ENCODE measurements at regions of chr1 and their contacts with region 1.

Region 1: DNA sequence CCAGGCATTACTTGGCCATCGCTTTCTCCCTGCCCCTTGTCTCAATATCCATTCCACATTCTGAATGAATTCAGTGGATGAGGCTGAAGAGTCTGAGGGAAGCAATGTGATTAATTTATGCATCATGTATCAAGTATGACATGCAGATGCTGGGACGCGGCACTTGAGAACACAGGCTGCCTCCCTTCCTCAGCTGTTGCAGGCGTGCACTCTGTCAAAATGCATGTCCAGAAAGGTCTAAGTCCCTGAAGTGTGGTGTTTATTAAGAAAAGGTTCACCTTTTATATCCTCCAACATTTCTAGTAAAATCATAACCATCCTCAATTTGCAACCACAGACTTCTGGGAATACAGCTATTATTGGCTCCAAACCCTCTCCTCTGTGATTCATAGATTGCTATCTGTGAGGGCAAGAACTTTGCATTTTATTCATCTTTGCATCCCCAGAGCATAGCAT is 22.6 kb upstream of the RAB3GAP2 start:
- DNase-seq: no peak
- H3K4me3 Mint-ChIP-seq: no peak overlapping the region
- H3K27ac Mint-ChIP-seq: no peak overlapping the region
- H3K4me1 Mint-ChIP-seq: no peaks in the 10 kb centered on the region
- H3K27me3 Mint-ChIP-seq: no peaks in the 10 kb centered on the region

Region 2: DNA sequence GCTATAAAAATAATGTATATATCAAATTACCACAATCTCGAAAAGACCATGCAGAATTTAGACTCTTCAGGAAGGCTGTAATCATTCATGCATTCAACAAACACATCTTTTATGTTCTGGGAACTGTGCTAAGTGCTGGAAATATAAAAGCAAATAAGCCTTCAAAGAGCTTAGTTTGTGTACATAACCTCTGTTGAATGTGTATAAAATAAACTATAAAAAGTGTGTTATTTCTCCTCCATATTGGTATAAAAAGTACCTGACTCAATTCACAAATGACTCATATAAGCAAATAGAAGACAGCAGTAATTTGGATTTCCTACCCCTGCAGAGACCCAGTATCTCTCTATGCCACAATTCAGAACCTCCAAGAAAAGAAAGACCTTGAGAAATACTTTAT is 59.4 kb before region 1 on chr1:
- CTCF ChIA-PET with region 1: no interaction called
- DNase-seq: no peak
- H3K4me3 Mint-ChIP-seq: no peak overlapping the region
- H3K27ac Mint-ChIP-seq: no peak overlapping the region
- H3K4me1 Mint-ChIP-seq: peaks cover 2% of the 10 kb centered on the region
- H3K27me3 Mint-ChIP-seq: no peaks in the 10 kb centered on the region

Region 3: GRCh38 chr1:220281159-220281574 is 13.7 kb before region 1 on chr1:
- CTCF ChIA-PET with region 1: interaction called, 15 read pairs
- DNase-seq: no peak
- H3K4me3 Mint-ChIP-seq: no peak overlapping the region
- H3K27ac Mint-ChIP-seq: no peak overlapping the region
- H3K4me1 Mint-ChIP-seq: no peaks in the 10 kb centered on the region
- H3K27me3 Mint-ChIP-seq: peaks cover 13% of the 10 kb centered on the region

Measured in activated naive CD4-positive, alpha-beta T cell treated with anti-CD3 and anti-CD28 coated beads, Interleukin-2, amount 10 ng/mL, durations not matched to agents 7 days and 5 days (primary cell).